ENCODE measurements at regions of chr1 and their contacts with region 1.

Region 1: GRCh38 chr1:41416552-41417334 is 55.5 kb downstream of the FOXO6 start:
- DNase-seq: peak; percentile 78
- ATAC-seq: peak; percentile 56
- H3K4me3 ChIP-seq: no peak overlapping the region
- H3K27ac ChIP-seq: no peak overlapping the region
- H3K4me1 ChIP-seq: peaks cover 15% of the 10 kb centered on the region
- H3K27me3 ChIP-seq: no peaks in the 10 kb centered on the region
- CTCF ChIP-seq: peak; percentile 95

Region 2: GRCh38 chr1:41268154-41268770 is 148.5 kb before region 1 on chr1:
- CTCF ChIA-PET with region 1: no interaction called
- POLR2A ChIA-PET with region 1: no interaction called
- intact Hi-C with region 1: loop called (anchors 1 kb)
- DNase-seq: peak; percentile 79
- ATAC-seq: peak; percentile 93
- H3K4me3 ChIP-seq: no peak overlapping the region
- H3K27ac ChIP-seq: no peak overlapping the region
- H3K4me1 ChIP-seq: no peaks in the 10 kb centered on the region
- H3K27me3 ChIP-seq: no peaks in the 10 kb centered on the region
- CTCF ChIP-seq: peak; percentile 91

Region 3: GRCh38 chr1:41282679-41283317 is 133.9 kb before region 1 on chr1:
- CTCF ChIA-PET with region 1: interaction called, 3 read pairs
- POLR2A ChIA-PET with region 1: no interaction called
- intact Hi-C with region 1: loop called (anchors 1 kb)
- DNase-seq: peak; percentile 48
- ATAC-seq: peak; percentile 67
- H3K4me3 ChIP-seq: no peak overlapping the region
- H3K27ac ChIP-seq: no peak overlapping the region
- H3K4me1 ChIP-seq: no peaks in the 10 kb centered on the region
- H3K27me3 ChIP-seq: peaks cover 15% of the 10 kb centered on the region
- CTCF ChIP-seq: peak; percentile 89

Region 4: GRCh38 chr1:41322835-41323627 is 93.7 kb before region 1 on chr1:
- CTCF ChIA-PET with region 1: interaction called, 4 read pairs
- POLR2A ChIA-PET with region 1: interaction called, 7 read pairs
- intact Hi-C with region 1: loop called (anchors 1 kb)
- DNase-seq: peak; percentile 66
- ATAC-seq: peak; percentile 99
- H3K4me3 ChIP-seq: no peak overlapping the region
- H3K27ac ChIP-seq: no peak overlapping the region
- H3K4me1 ChIP-seq: no peaks in the 10 kb centered on the region
- H3K27me3 ChIP-seq: no peaks in the 10 kb centered on the region
- CTCF ChIP-seq: peak; percentile 73

Region 5: GRCh38 chr1:41381692-41382477 is 34.9 kb before region 1 on chr1:
- CTCF ChIA-PET with region 1: no interaction called
- POLR2A ChIA-PET with region 1: no interaction called
- intact Hi-C with region 1: loop called (anchors 5 kb)
- DNase-seq: peak; percentile 72
- ATAC-seq: peak; percentile 72
- H3K4me3 ChIP-seq: peak overlapping the region; percentile 78
- H3K27ac ChIP-seq: peak overlapping the region; percentile 56
- H3K4me1 ChIP-seq: peaks cover 18% of the 10 kb centered on the region
- H3K27me3 ChIP-seq: no peaks in the 10 kb centered on the region
- CTCF ChIP-seq: no peak